Natural killer cell (primary cell): ENCODE measurements at regions of chr6 and their contacts with region 1.

Region 1: DNA sequence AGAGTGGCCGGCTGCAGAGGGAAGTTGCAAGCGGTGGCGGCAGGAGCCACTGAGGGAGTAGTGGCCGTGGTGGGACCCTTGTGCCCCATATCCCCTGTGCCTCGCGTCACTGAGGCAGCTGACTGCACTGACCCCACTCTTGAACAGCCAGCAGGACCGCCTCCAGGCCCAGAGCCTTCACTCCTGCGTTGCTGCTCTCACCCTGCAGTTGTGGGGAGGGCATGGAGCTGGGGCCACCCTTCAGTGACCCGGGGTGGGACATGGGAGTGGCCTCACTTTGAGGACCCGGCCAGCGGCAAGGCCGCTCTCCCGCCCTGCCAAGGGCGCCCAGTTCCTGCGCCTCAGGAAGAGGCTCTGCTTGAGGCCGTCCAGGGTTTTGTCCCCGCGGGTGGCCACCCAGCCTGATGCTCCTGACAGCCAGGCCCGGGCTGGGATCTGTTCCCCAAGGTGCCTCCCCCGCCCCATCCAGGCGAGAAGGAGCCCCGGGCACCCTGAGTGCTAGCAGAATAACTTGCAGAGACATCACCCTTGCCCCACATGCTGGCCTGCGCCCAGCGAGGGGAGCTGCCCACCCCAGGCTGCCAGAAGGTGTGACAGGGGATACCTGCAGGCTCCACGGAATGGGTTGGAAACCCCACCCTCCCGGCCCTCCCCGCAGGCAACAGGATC is 44.4 kb downstream of the HLA-DRA start:
- DNase-seq: no peak
- ATAC-seq: no peak
- H3K4me3 ChIP-seq: no peak overlapping the region
- H3K4me3 Mint-ChIP-seq: no peak overlapping the region
- H3K27ac ChIP-seq: no peak overlapping the region
- H3K27ac Mint-ChIP-seq: no peak overlapping the region
- H3K4me1 ChIP-seq: no peaks in the 10 kb centered on the region
- H3K4me1 Mint-ChIP-seq: no peaks in the 10 kb centered on the region
- H3K27me3 ChIP-seq: no peaks in the 10 kb centered on the region
- H3K27me3 Mint-ChIP-seq: peaks cover 16 to 26% of the 10 kb centered on the region in 2 donors
- CTCF ChIP-seq: no peak

Region 2: DNA sequence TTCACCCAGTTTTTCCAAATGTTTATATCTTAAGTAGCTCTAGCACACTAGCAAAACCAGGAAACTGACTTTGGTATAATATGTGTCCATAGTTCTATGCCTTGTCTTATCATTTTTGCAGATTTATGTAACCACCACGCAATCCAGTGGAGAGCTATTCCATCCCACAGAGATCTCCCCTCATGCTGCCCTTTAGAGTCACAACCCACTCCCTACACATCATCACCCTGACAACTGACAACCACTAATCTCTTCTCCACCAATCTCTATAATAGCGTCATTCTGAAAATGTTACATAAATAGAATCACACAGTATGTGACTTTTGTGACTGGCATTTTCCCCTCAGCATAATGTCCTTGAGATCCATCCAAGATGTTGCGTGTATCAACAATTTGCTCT is 16.9 kb after region 1 on chr6:
- intact Hi-C with region 1: no loop called
- DNase-seq: no peak
- ATAC-seq: no peak
- H3K4me3 ChIP-seq: no peak overlapping the region
- H3K4me3 Mint-ChIP-seq: no peak overlapping the region
- H3K27ac ChIP-seq: no peak overlapping the region
- H3K27ac Mint-ChIP-seq: no peak overlapping the region
- H3K4me1 ChIP-seq: no peaks in the 10 kb centered on the region
- H3K4me1 Mint-ChIP-seq: no peaks in the 10 kb centered on the region
- H3K27me3 ChIP-seq: no peaks in the 10 kb centered on the region
- H3K27me3 Mint-ChIP-seq: peaks cover 3 to 9% of the 10 kb centered on the region in 2 donors
- CTCF ChIP-seq: no peak

Region 3: GRCh38 chr6:32570363-32570905 is 86.3 kb after region 1 on chr6:
- intact Hi-C with region 1: loop called (anchors 1 kb)
- DNase-seq: no peak
- ATAC-seq: no peak
- H3K4me3 ChIP-seq: no peak overlapping the region
- H3K4me3 Mint-ChIP-seq: no peak overlapping the region
- H3K27ac ChIP-seq: no peak overlapping the region
- H3K27ac Mint-ChIP-seq: peak overlapping the region in 1 of 2 donors; percentile 50
- H3K4me1 ChIP-seq: no peaks in the 10 kb centered on the region
- H3K4me1 Mint-ChIP-seq: peaks cover 12 to 18% of the 10 kb centered on the region in 2 donors
- H3K27me3 ChIP-seq: no peaks in the 10 kb centered on the region
- H3K27me3 Mint-ChIP-seq: peaks cover 0 to 8% of the 10 kb centered on the region in 2 donors
- CTCF ChIP-seq: no peak

Region 4: GRCh38 chr6:32576250-32576649 is 92.1 kb after region 1 on chr6:
- intact Hi-C with region 1: loop called (anchors 1 kb)
- DNase-seq: no peak
- ATAC-seq: no peak
- H3K4me3 ChIP-seq: no peak overlapping the region
- H3K4me3 Mint-ChIP-seq: no peak overlapping the region
- H3K27ac ChIP-seq: no peak overlapping the region
- H3K27ac Mint-ChIP-seq: no peak overlapping the region
- H3K4me1 ChIP-seq: no peaks in the 10 kb centered on the region
- H3K4me1 Mint-ChIP-seq: peaks cover 21 to 24% of the 10 kb centered on the region in 2 donors
- H3K27me3 ChIP-seq: no peaks in the 10 kb centered on the region
- H3K27me3 Mint-ChIP-seq: no peaks in the 10 kb centered on the region
- CTCF ChIP-seq: no peak